Activated CD4-positive, alpha-beta memory T cell treated with anti-CD3 and anti-CD28 coated beads, Interleukin-2, amount 10 ng/mL, durations not matched to agents 7 days and 5 days (primary cell): ENCODE measurements at regions of chr10 and their contacts with region 1.

Region 1: DNA sequence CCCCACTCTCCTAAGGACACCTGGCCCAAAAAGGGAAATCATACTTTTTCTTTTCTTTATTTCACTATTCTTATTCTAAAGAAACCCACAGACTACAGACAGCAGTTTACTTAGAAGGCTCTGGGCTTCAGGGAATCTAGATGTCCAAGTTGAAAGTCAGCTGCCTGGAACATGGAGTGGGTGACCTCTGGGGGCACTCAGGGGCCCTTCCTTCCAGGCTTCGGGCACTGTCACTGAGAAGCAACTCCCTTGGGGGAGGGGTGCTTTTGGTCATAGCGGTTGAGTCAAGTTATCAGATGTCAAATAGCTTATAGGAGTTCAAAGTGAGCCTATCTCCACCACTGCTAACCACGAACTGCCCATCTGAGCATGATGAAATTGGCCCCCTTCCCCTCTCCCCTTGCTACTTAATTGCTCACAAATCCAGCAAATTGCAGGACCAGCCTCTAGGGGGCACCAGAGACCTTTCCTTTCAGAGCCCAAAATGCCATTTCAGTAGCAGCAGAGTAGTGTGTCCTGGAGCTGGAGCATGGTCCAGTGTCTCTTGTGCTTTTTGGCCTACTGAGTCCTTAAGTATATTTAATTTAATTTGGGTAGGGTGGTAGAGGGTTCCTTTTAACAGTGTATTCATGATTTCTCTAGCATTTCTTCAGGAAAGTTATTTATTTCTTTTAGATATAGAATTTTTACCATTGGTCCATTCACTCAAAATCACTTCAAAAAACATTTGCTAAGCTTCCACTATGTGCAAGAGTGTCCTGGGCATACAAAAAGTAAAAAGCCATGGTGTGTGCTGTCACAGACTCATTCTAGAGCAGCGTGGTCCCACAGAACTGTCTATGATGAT is 463.8 kb downstream of the KCNMA1 start:
- DNase-seq: peak; percentile 66
- H3K4me3 Mint-ChIP-seq: no peak overlapping the region
- H3K27ac Mint-ChIP-seq: no peak overlapping the region
- H3K4me1 Mint-ChIP-seq: no peaks in the 10 kb centered on the region
- H3K27me3 Mint-ChIP-seq: no peaks in the 10 kb centered on the region

Region 2: GRCh38 chr10:77333610-77334340 is 159.9 kb after region 1 on chr10:
- CTCF ChIA-PET with region 1: no interaction called
- POLR2A ChIA-PET with region 1: no interaction called
- DNase-seq: no peak
- H3K4me3 Mint-ChIP-seq: no peak overlapping the region
- H3K27ac Mint-ChIP-seq: no peak overlapping the region
- H3K4me1 Mint-ChIP-seq: no peaks in the 10 kb centered on the region
- H3K27me3 Mint-ChIP-seq: no peaks in the 10 kb centered on the region

Region 3: GRCh38 chr10:77641788-77642397 is 468.1 kb after region 1 on chr10:
- CTCF ChIA-PET with region 1: interaction called, 50 read pairs
- POLR2A ChIA-PET with region 1: no interaction called
- DNase-seq: peak; percentile 49
- H3K4me3 Mint-ChIP-seq: no peak overlapping the region
- H3K27ac Mint-ChIP-seq: no peak overlapping the region
- H3K4me1 Mint-ChIP-seq: no peaks in the 10 kb centered on the region
- H3K27me3 Mint-ChIP-seq: peaks cover 36% of the 10 kb centered on the region